Activated naive CD4-positive, alpha-beta T cell treated with anti-CD3 and anti-CD28 coated beads for 36 hours (primary cell): ENCODE measurements at regions of chr5 and their contacts with region 1.

Region 1: GRCh38 chr5:80093796-80094195 is 58.6 kb downstream of the THBS4 start:
- DNase-seq: no peak
- H3K4me3 Mint-ChIP-seq: no peak overlapping the region
- H3K27ac Mint-ChIP-seq: no peak overlapping the region
- H3K4me1 Mint-ChIP-seq: peaks cover 20% of the 10 kb centered on the region
- H3K27me3 Mint-ChIP-seq: no peaks in the 10 kb centered on the region

Region 2: GRCh38 chr5:80204808-80205614 is 111.2 kb after region 1 on chr5:
- CTCF ChIA-PET with region 1: interaction called, 12 read pairs
- intact Hi-C with region 1: loop called (anchors 1 kb)
- DNase-seq: peak; percentile 46
- H3K4me3 Mint-ChIP-seq: no peak overlapping the region
- H3K27ac Mint-ChIP-seq: peak overlapping the region; percentile 88
- H3K4me1 Mint-ChIP-seq: peaks cover 82% of the 10 kb centered on the region
- H3K27me3 Mint-ChIP-seq: no peaks in the 10 kb centered on the region

Region 3: GRCh38 chr5:80229902-80230255 is 136.1 kb after region 1 on chr5:
- CTCF ChIA-PET with region 1: no interaction called
- intact Hi-C with region 1: no loop called
- DNase-seq: no peak
- H3K4me3 Mint-ChIP-seq: no peak overlapping the region
- H3K27ac Mint-ChIP-seq: peak overlapping the region; percentile 28
- H3K4me1 Mint-ChIP-seq: peaks cover 79% of the 10 kb centered on the region
- H3K27me3 Mint-ChIP-seq: no peaks in the 10 kb centered on the region

Region 4: DNA sequence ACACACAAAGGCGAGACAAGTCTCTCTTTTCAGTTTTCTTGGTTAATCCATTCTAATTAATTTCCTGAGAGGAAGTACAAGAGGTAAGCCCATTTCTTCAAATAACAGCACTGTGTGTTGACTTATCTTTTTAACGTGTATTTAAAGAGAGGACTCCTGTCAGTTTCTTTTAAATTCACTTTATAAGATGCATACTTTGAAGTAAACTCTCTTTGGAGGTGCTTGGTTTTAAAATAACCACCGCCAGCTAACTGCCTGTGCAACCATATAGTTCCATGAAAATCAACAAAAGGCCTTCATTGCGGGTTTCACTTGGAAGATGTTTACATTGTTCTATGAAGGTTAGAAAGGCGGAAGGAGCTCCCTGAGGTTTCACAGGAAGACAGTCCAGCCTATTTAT is 175.1 kb after region 1 on chr5:
- CTCF ChIA-PET with region 1: interaction called, 86 read pairs
- intact Hi-C with region 1: no loop called
- DNase-seq: no peak
- H3K4me3 Mint-ChIP-seq: peak overlapping the region; percentile 50
- H3K27ac Mint-ChIP-seq: peak overlapping the region; percentile 68
- H3K4me1 Mint-ChIP-seq: peaks cover 46% of the 10 kb centered on the region
- H3K27me3 Mint-ChIP-seq: no peaks in the 10 kb centered on the region

Region 5: DNA sequence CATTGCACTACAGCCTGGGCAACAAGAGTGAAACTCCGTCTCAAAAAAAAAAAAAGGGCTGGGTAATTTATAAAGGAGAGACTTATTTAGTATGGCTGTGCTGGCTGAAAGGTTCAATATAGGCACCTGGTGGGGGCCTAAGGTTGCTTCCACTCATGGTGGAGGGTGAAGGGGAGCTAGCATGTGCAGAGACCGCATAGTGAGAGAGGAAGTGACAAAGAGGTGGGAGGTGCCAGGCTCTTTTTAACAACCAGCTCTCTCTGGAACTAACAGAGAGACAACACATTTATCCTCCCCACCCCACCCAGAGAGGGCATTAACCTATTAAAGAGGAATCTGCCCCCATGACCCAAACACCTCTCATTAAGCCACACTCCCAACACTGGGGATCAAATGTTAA is 190.9 kb after region 1 on chr5:
- CTCF ChIA-PET with region 1: interaction called, 86 read pairs
- intact Hi-C with region 1: no loop called
- DNase-seq: peak; percentile 57
- H3K4me3 Mint-ChIP-seq: no peak overlapping the region
- H3K27ac Mint-ChIP-seq: peak overlapping the region; percentile 74
- H3K4me1 Mint-ChIP-seq: peaks cover 21% of the 10 kb centered on the region
- H3K27me3 Mint-ChIP-seq: no peaks in the 10 kb centered on the region

Region 6: GRCh38 chr5:80487829-80488721 is 394.3 kb after region 1 on chr5 and contains the start of gene FAM151B:
- CTCF ChIA-PET with region 1: no interaction called
- intact Hi-C with region 1: loop called (anchors 5 kb)
- DNase-seq: peak; percentile 85
- H3K4me3 Mint-ChIP-seq: peak within 1 kb of the TSS; percentile 79
- H3K27ac Mint-ChIP-seq: no peak within 1 kb of the TSS
- H3K4me1 Mint-ChIP-seq: peaks cover 13% of the 10 kb centered on the region
- H3K27me3 Mint-ChIP-seq: no peaks in the 10 kb centered on the region
- total RNA-seq, gene FAM151B: 0.15 to 0.36 TPM

Region 7: GRCh38 chr5:80672140-80672736 is 578.4 kb after region 1 on chr5:
- CTCF ChIA-PET with region 1: interaction called, 3 read pairs
- intact Hi-C with region 1: loop called (anchors 2 kb)
- DNase-seq: peak; percentile 85
- H3K4me3 Mint-ChIP-seq: no peak overlapping the region
- H3K27ac Mint-ChIP-seq: no peak overlapping the region
- H3K4me1 Mint-ChIP-seq: no peaks in the 10 kb centered on the region
- H3K27me3 Mint-ChIP-seq: no peaks in the 10 kb centered on the region

Region 8: DNA sequence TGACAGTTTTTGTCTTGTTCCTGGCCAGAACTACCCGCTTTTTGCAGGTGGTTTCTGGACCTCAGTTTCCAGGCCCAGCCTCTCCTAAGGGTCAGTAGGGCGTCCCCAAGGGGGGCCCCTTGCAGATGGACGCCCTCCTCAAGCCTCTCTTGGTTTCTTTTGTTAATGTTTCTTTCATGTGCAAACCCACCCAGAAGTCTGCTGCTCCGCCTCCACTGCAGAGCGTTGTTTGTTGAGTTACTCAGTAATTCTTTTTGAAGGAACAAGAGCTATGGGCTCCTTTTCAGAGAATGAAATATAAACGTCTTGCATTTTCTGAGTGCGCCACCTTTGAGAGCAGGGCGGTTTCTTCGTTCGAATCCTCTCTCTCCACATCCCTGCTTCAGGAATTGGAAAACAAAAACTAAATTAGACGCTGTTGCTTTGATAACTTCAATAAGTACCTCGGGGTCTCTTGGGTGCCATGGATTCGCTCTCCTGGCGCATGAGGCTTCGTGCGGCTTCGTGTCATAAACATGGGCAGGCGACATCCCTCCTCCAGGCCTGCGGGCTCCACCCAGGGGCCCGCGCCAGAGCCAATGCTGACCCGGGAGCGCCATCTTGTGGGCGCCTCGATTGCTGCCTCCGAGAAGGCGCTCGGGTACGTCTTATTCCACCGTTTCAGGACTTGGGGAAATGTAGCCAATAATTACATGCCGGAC is 1101.0 kb after region 1 on chr5:
- CTCF ChIA-PET with region 1: no interaction called
- intact Hi-C with region 1: loop called (anchors 10 kb)
- DNase-seq: peak; percentile 88
- H3K4me3 Mint-ChIP-seq: peak overlapping the region; percentile 51
- H3K27ac Mint-ChIP-seq: no peak overlapping the region
- H3K4me1 Mint-ChIP-seq: peaks cover 8% of the 10 kb centered on the region
- H3K27me3 Mint-ChIP-seq: no peaks in the 10 kb centered on the region